GM10248 (cell line): ENCODE measurements at regions of chr1 and their contacts with region 1.

Region 1: GRCh38 chr1:28208818-28209441 is 23.9 kb downstream of the DNAJC8 start:
- DNase-seq: peak; percentile 63
- CTCF ChIP-seq: peak; percentile 74

Region 2: DNA sequence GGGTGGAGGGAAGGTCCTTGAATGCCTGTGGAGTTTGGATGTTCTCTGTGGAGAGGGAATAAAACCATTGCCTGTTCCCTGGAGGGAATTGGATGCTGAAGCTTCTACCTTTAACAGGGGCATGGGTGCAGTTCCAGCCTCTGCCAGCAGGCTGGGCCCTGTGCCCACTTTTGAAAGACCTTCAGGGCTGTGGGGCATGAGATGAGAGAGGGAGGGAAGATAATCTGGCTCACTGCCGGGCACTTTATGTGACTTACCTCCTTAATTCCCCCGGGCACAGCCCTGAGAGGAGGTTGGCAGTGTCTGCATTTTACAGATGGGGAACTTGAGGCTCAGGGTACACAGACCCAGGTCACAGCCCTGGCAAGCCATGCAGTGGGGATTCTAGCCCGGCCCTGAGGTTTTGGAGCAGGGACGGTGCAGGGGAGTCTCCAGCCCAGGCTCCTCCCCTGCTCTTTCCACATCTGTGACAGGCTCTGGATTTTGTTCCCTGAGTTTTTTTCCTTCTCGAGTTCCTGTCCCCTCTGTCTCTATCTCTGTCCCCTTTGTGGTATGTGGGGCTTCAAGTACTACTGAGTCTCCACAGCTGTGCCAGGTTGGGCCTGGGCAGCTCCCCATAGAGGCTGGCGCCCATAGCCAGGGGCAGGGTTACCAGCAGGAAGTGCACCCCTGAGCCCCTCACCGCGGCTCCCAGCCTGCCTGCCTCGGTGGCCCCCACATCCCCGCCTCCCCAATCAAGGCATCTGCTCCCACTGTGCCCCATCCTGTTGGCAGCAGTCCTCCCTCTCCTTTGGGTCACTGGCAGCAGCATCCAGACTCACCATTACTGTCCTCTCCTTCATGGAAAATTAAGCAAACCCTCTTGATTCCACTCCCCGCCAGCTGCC is 350.6 kb before region 1 on chr1:
- CTCF ChIA-PET with region 1: interaction called, 12 read pairs
- POLR2A ChIA-PET with region 1: no interaction called
- DNase-seq: peak; percentile 82
- CTCF ChIP-seq: peak; percentile 99

Region 3: GRCh38 chr1:28193701-28194161 is 15.2 kb before region 1 on chr1:
- CTCF ChIA-PET with region 1: interaction called, 10 read pairs
- POLR2A ChIA-PET with region 1: no interaction called
- DNase-seq: no peak
- CTCF ChIP-seq: no peak